Left lung (tissue), 14 donors: ENCODE measurements at regions of chr5 and their contacts with region 1.

Region 1: DNA sequence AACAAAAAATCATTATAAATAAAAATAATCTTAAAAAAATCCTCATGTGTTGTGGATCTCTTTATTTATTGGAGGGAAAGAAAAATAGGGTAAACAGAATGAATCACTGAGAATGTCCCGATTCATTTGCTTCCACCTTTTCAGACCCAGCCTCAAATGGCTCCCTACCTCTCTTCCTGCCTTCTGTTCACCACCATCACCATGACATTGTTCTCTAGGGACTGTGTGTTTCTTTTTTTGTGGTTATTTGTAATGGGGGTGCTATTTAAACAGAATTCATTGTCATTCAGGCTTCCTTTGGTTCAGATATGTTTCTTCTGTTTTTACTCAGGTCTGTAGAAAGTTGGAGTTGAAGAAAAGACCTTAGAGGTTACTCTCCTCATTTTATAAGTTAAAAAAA is 198.2 kb downstream of the KIF4B start:
- DNase-seq: no peak
- ATAC-seq: no peak
- H3K4me3 ChIP-seq: no peak overlapping the region
- H3K27ac ChIP-seq: no peak overlapping the region
- H3K4me1 ChIP-seq: no peaks in the 10 kb centered on the region
- H3K27me3 ChIP-seq: no peaks in the 10 kb centered on the region
- CTCF ChIP-seq: no peak

Region 2: GRCh38 chr5:155136216-155136850 is 75.4 kb before region 1 on chr5:
- intact Hi-C with region 1: loop called in 1 of 2 experiments (anchors 10 kb)
- DNase-seq: no peak
- ATAC-seq: no peak
- H3K4me3 ChIP-seq: no peak overlapping the region
- H3K27ac ChIP-seq: no peak overlapping the region
- H3K4me1 ChIP-seq: no peaks in the 10 kb centered on the region
- H3K27me3 ChIP-seq: peaks cover 0 to 4% of the 10 kb centered on the region in 2 donors
- CTCF ChIP-seq: no peak